Activated CD4-positive, alpha-beta memory T cell treated with anti-CD3 and anti-CD28 coated beads for 36 hours (primary cell): ENCODE measurements at regions of chr2 and their contacts with region 1.

Region 1: DNA sequence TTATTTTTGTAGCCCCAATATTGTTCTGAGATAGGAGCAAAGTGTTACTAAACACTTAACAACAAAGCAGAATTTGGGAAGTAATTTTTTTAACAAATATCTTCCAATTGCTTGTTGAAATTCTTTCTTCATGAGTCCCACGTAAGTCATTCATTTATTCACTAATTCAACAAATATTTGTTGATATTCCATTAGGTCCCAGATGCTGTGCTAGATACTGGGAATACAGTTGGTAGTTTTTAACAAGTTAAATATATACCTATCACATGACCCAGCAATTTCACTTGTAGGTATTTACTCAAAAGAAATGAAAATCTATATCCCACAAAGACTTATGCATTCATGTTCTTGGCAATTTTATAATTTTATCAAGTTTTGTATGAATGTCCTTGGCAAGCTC is 7.0 kb upstream of the BBS5 start:
- DNase-seq: no peak
- H3K4me3 Mint-ChIP-seq: no peak overlapping the region
- H3K27ac Mint-ChIP-seq: no peak overlapping the region
- H3K4me1 Mint-ChIP-seq: no peaks in the 10 kb centered on the region
- H3K27me3 Mint-ChIP-seq: no peaks in the 10 kb centered on the region

Region 2: DNA sequence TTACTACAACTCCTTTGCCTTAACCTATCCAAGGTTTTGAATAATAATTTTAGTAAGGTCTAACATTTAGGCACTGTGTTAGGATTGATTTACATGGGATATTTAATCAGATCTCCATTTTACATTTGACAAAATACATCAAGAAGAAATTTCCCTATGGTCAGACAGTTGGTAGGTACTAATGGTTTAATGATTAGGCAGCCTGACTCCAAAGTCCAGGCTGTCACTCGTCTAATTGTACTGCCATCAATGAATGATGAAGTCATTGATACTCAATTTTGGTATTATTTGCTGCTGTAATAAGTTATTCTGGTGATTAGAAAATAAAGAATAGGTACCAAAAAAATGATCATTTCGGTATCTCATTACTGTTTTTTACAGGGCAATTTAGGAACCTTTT is 21.1 kb after region 1 on chr2:
- CTCF ChIA-PET with region 1: no interaction called
- POLR2A ChIA-PET with region 1: no interaction called
- intact Hi-C with region 1: no loop called
- DNase-seq: no peak
- H3K4me3 Mint-ChIP-seq: no peak overlapping the region
- H3K27ac Mint-ChIP-seq: no peak overlapping the region
- H3K4me1 Mint-ChIP-seq: no peaks in the 10 kb centered on the region
- H3K27me3 Mint-ChIP-seq: no peaks in the 10 kb centered on the region

Region 3: GRCh38 chr2:169561364-169561763 is 89.1 kb after region 1 on chr2:
- CTCF ChIA-PET with region 1: no interaction called
- POLR2A ChIA-PET with region 1: no interaction called
- intact Hi-C with region 1: loop called (anchors 2 kb)
- DNase-seq: no peak
- H3K4me3 Mint-ChIP-seq: no peak overlapping the region
- H3K27ac Mint-ChIP-seq: no peak overlapping the region
- H3K4me1 Mint-ChIP-seq: no peaks in the 10 kb centered on the region
- H3K27me3 Mint-ChIP-seq: no peaks in the 10 kb centered on the region